Heart right ventricle (tissue), 16 donors: ENCODE measurements at regions of chr3 and their contacts with region 1.

Region 1: DNA sequence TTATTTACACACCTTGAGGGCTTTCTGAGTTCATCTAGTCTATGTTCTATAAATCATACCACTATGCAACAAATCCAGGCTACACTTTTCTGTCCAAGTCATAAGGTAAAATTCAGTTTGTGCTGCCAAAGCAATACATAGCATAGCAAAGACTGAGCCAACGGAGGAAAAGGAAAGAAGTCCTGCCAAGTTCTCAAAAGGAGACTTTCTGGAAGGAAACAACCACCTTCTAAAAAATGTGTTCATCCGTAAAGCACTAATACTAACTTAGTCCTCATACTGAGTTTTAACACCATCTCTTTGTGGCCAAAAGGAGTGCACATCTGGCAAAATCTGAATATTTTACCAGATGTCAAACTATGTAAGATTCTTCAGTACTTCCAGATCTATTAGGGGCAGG is 620.2 kb downstream of the RBMS3 start:
- DNase-seq: no peak
- ATAC-seq: peak in 4 of 8 donors; percentile 35 to 61 (median 56)
- H3K4me3 ChIP-seq: no peak overlapping the region
- H3K27ac ChIP-seq: peak overlapping the region in 2 of 10 donors; percentile 7 to 22
- H3K4me1 ChIP-seq: peaks cover 0 to 19% (median 4%) of the 10 kb centered on the region in 9 donors
- H3K27me3 ChIP-seq: no peaks in the 10 kb centered on the region
- CTCF ChIP-seq: no peak

Region 2: DNA sequence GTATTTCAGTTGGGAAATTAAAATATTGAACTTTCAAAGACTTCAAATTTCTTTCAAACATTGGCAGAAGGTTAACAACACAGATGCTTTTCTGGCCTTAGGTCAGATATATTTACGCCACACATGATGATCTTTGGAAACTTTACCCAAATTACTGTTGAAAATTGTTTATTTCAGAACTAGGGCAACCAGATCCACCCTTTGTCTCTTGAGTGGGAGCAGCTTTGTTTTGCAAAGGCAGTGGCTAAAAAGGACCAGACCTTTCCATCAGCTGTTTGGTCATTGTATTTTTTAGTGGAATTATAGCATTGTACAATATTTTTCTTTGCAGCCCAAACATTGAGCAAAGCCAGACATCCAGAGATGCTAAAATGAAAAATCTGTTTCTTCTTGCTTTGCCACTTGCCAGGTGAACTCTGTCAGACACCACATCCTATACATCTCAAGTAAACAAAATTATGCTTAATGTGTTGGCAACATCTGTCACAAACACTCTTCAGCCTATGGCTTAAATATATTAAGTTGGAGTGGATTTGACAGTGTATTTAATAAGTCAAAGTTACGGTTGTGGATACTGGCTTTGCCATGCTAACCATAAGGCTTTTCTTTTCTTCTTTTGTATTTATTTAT is 31.7 kb after region 1 on chr3:
- intact Hi-C with region 1: loop called in 1 of 10 experiments (anchors 1 kb)
- DNase-seq: no peak
- ATAC-seq: peak in 1 of 8 donors; percentile 38
- H3K4me3 ChIP-seq: no peak overlapping the region
- H3K27ac ChIP-seq: peak overlapping the region in 1 of 10 donors; percentile 8
- H3K4me1 ChIP-seq: peaks cover 0 to 22% (median 7%) of the 10 kb centered on the region in 9 donors
- H3K27me3 ChIP-seq: no peaks in the 10 kb centered on the region
- CTCF ChIP-seq: no peak

Region 3: GRCh38 chr3:30401971-30402370 is 500.9 kb after region 1 on chr3:
- intact Hi-C with region 1: no loop called
- DNase-seq: peak in 1 of 2 donors; percentile 14
- ATAC-seq: peak in 7 of 8 donors; percentile 56 to 84 (median 76)
- H3K4me3 ChIP-seq: no peak overlapping the region
- H3K27ac ChIP-seq: peak overlapping the region in 6 of 10 donors; percentile 0 to 49 (median 16)
- H3K4me1 ChIP-seq: peaks cover 0 to 42% (median 29%) of the 10 kb centered on the region in 9 donors
- H3K27me3 ChIP-seq: no peaks in the 10 kb centered on the region
- CTCF ChIP-seq: no peak